Motor neuron (in vitro differentiated cells): ENCODE measurements at regions of chr5 and their contacts with region 1.

Region 1: DNA sequence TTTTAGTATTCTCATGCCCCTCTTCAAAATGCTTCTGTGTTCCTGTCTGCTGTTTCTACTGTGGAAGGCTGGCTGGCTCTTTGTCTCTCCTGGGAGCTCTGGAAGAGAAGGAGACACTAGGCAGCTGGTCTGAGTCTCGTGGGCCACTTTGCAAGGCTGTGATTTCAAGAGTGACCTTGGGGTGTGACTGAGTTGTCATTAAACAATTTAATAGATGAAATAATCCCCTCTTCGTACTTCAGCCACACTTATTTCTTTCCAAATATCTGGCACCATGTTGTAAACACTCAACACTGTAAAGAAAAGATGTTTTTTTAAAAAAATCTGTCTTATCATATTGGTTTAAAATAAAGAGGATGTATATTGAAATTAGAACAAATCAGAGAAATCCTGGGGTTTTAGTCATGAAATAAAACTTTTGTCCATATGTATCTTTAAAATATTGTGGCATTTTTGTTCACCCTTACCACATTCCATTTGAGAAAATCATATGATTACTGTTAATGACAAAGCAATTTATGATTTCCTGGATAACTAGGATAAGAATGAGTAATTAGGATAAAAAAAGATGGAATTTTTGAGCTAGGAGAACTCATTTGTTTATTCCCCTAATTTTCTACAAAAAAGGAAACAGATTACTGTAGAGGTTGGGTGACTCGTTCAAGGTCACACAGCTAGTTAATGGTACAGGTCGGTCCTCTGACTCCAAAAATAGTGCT is 200.8 kb downstream of the MAT2B start:
- ATAC-seq: no peak
- H3K4me3 ChIP-seq: no peak overlapping the region
- H3K27ac ChIP-seq: no peak overlapping the region
- H3K4me1 ChIP-seq: peaks cover 0 to 5% of the 10 kb centered on the region in 2 donors

Region 2: GRCh38 chr5:163205645-163206044 is 500.6 kb before region 1 on chr5:
- in situ Hi-C with region 1: no loop called
- ATAC-seq: no peak
- H3K4me3 ChIP-seq: no peak overlapping the region
- H3K27ac ChIP-seq: no peak overlapping the region
- H3K4me1 ChIP-seq: no peaks in the 10 kb centered on the region

Region 3: GRCh38 chr5:163459922-163460766 is 246.1 kb before region 1 on chr5 and contains the starts of genes HMMR and NUDCD2:
- in situ Hi-C with region 1: no loop called
- ATAC-seq: peak; percentile 75 to 88 (median 86)
- H3K4me3 ChIP-seq: peak within 1 kb of the TSS; percentile 54 to 93 (median 81)
- H3K27ac ChIP-seq: peak within 1 kb of the TSS; percentile 90 to 97
- H3K4me1 ChIP-seq: peaks cover 0 to 2% of the 10 kb centered on the region in 2 donors
- total RNA-seq, gene HMMR: 0.86 to 37.5 (median 3.4) TPM
- total RNA-seq, gene NUDCD2: 17.3 to 35.4 (median 19.4) TPM

Region 4: DNA sequence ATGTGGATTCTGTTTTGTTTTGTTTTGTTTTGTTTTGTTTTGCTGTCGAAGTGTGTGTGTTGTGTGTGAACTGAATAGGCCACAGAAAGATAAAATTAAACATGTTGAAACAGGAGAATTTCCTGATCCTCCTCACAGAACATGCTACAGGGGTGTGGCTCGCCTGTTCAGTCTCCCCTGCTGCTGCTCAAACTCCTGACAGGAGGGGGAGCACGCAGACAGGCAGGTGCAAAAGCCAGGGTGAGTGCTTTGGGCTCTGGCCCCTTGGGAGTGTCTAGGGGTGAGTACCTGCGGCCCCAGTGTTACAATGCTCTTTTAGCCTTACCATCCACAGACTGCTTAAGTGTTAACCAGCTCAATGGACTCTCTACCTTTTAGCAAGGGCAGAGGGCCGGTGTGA is 272.7 kb after region 1 on chr5:
- in situ Hi-C with region 1: loop called in 1 of 9 experiments (anchors 25 kb)
- ATAC-seq: no peak
- H3K4me3 ChIP-seq: no peak overlapping the region
- H3K27ac ChIP-seq: no peak overlapping the region
- H3K4me1 ChIP-seq: peaks cover 2 to 3% of the 10 kb centered on the region in 2 donors